CD8-positive, alpha-beta memory T cell (primary cell): ENCODE measurements at regions of chr19 and their contacts with region 1.

Region 1: GRCh38 chr19:42132851-42133528 is 744 bp upstream of the POU2F2 start:
- DNase-seq: peak; percentile 79 to 86 (median 80)
- H3K4me3 ChIP-seq: peak overlapping the region; percentile 90
- H3K4me3 Mint-ChIP-seq: peak overlapping the region; percentile 77 to 95 (median 87)
- H3K27ac ChIP-seq: peak overlapping the region; percentile 56
- H3K27ac Mint-ChIP-seq: peak overlapping the region; percentile 72 to 97 (median 96)
- H3K4me1 ChIP-seq: peaks cover 43% of the 10 kb centered on the region
- H3K4me1 Mint-ChIP-seq: peaks cover 56 to 80% (median 63%) of the 10 kb centered on the region in 3 donors
- H3K27me3 ChIP-seq: no peaks in the 10 kb centered on the region
- H3K27me3 Mint-ChIP-seq: no peaks in the 10 kb centered on the region

Region 2: GRCh38 chr19:42108527-42109389 is 24.2 kb before region 1 on chr19:
- CTCF ChIA-PET with region 1: interaction called, 46 read pairs
- POLR2A ChIA-PET with region 1: no interaction called
- DNase-seq: peak; percentile 79 to 91 (median 83)
- H3K4me3 ChIP-seq: no peak overlapping the region
- H3K4me3 Mint-ChIP-seq: no peak overlapping the region
- H3K27ac ChIP-seq: no peak overlapping the region
- H3K27ac Mint-ChIP-seq: peak overlapping the region in 5 of 8 donors; percentile 36 to 77 (median 58)
- H3K4me1 ChIP-seq: peaks cover 6% of the 10 kb centered on the region
- H3K4me1 Mint-ChIP-seq: peaks cover 3 to 12% (median 11%) of the 10 kb centered on the region in 3 donors
- H3K27me3 ChIP-seq: no peaks in the 10 kb centered on the region
- H3K27me3 Mint-ChIP-seq: no peaks in the 10 kb centered on the region

Region 3: DNA sequence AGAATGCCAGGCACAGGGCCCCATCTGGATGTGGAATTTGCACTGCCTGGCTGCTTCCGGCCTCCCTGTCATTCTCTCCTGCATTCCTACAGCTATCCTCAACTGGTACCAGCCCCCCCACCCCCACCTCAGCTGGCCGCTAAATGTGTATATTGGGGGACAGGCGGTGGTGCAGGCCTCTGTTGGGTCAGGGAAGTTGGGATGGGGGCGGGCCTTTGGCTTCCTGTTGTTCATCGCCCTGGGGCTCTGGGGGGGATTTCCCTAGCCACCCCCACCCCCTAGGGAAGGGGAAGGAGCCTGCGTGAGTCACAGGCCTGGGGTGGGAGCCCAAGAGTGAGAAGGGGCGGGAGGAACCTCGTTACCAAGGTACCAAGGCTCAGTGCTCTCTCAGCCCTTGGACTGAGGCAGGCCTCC is 11.3 kb before region 1 on chr19:
- CTCF ChIA-PET with region 1: interaction called, 16 read pairs
- POLR2A ChIA-PET with region 1: interaction called, 5 read pairs
- DNase-seq: peak; percentile 41 to 83 (median 53)
- H3K4me3 ChIP-seq: peak overlapping the region; percentile 32
- H3K4me3 Mint-ChIP-seq: peak overlapping the region in 6 of 7 donors; percentile 45 to 81 (median 70)
- H3K27ac ChIP-seq: peak overlapping the region; percentile 64
- H3K27ac Mint-ChIP-seq: peak overlapping the region; percentile 86 to 98 (median 95)
- H3K4me1 ChIP-seq: peaks cover 48% of the 10 kb centered on the region
- H3K4me1 Mint-ChIP-seq: peaks cover 51 to 63% (median 51%) of the 10 kb centered on the region in 3 donors
- H3K27me3 ChIP-seq: no peaks in the 10 kb centered on the region
- H3K27me3 Mint-ChIP-seq: no peaks in the 10 kb centered on the region

Region 4: GRCh38 chr19:42176990-42177685 is 44.1 kb after region 1 on chr19:
- CTCF ChIA-PET with region 1: interaction called, 13 read pairs
- POLR2A ChIA-PET with region 1: no interaction called
- DNase-seq: peak; percentile 65 to 83 (median 72)
- H3K4me3 ChIP-seq: peak overlapping the region; percentile 17
- H3K4me3 Mint-ChIP-seq: peak overlapping the region in 2 of 7 donors; percentile 45 to 83
- H3K27ac ChIP-seq: no peak overlapping the region
- H3K27ac Mint-ChIP-seq: no peak overlapping the region
- H3K4me1 ChIP-seq: peaks cover 12% of the 10 kb centered on the region
- H3K4me1 Mint-ChIP-seq: peaks cover 10 to 18% (median 13%) of the 10 kb centered on the region in 3 donors
- H3K27me3 ChIP-seq: peaks cover 18% of the 10 kb centered on the region
- H3K27me3 Mint-ChIP-seq: peaks cover 7 to 23% of the 10 kb centered on the region in 2 donors

Region 5: DNA sequence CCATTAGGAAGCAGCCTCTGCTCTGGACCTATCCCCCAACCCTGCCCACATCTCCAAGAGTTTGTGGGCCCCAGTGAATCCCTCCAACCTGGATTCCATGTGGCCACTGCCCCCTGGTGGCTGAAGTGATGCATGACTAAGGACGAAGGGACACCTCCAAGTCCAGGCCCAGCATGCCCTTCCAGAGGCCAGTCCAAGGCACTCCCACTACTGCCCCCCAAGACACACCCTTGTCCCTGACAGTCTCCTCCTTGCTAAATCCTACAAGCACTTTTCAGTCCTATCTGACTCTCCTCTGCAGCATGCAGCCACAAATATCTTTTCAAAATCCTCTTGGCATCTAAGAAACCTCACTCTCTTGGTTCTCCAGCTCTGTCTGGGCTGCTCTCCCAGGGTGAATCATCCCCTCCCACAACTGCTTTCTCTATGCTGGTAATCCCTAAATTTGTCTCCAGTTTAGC is 51.4 kb after region 1 on chr19:
- CTCF ChIA-PET with region 1: interaction called, 19 read pairs
- POLR2A ChIA-PET with region 1: no interaction called
- DNase-seq: peak; percentile 45 to 84 (median 60)
- H3K4me3 ChIP-seq: no peak overlapping the region
- H3K4me3 Mint-ChIP-seq: peak overlapping the region in 6 of 7 donors; percentile 15 to 77 (median 50)
- H3K27ac ChIP-seq: no peak overlapping the region
- H3K27ac Mint-ChIP-seq: peak overlapping the region in 7 of 8 donors; percentile 13 to 94 (median 68)
- H3K4me1 ChIP-seq: peaks cover 21% of the 10 kb centered on the region
- H3K4me1 Mint-ChIP-seq: peaks cover 49 to 60% (median 50%) of the 10 kb centered on the region in 3 donors
- H3K27me3 ChIP-seq: peaks cover 7% of the 10 kb centered on the region
- H3K27me3 Mint-ChIP-seq: peaks cover 0 to 8% of the 10 kb centered on the region in 2 donors

Region 6: GRCh38 chr19:42244347-42245220 is 111.6 kb after region 1 on chr19:
- CTCF ChIA-PET with region 1: interaction called, 10 read pairs
- POLR2A ChIA-PET with region 1: interaction called, 9 read pairs
- DNase-seq: peak; percentile 84 to 94 (median 86)
- H3K4me3 ChIP-seq: peak overlapping the region; percentile 81
- H3K4me3 Mint-ChIP-seq: peak overlapping the region; percentile 94 to 99 (median 96)
- H3K27ac ChIP-seq: peak overlapping the region; percentile 66
- H3K27ac Mint-ChIP-seq: peak overlapping the region; percentile 95 to 99 (median 98)
- H3K4me1 ChIP-seq: peaks cover 40% of the 10 kb centered on the region
- H3K4me1 Mint-ChIP-seq: peaks cover 42 to 58% (median 45%) of the 10 kb centered on the region in 3 donors
- H3K27me3 ChIP-seq: no peaks in the 10 kb centered on the region
- H3K27me3 Mint-ChIP-seq: peaks cover 0 to 2% of the 10 kb centered on the region in 2 donors

Region 7: GRCh38 chr19:42295831-42296525 is 163.0 kb after region 1 on chr19:
- CTCF ChIA-PET with region 1: interaction called, 16 read pairs
- POLR2A ChIA-PET with region 1: interaction called, 3 read pairs
- DNase-seq: peak; percentile 77 to 92 (median 85)
- H3K4me3 ChIP-seq: no peak overlapping the region
- H3K4me3 Mint-ChIP-seq: no peak overlapping the region
- H3K27ac ChIP-seq: no peak overlapping the region
- H3K27ac Mint-ChIP-seq: peak overlapping the region in 5 of 8 donors; percentile 55 to 70 (median 61)
- H3K4me1 ChIP-seq: no peaks in the 10 kb centered on the region
- H3K4me1 Mint-ChIP-seq: peaks cover 5 to 17% (median 10%) of the 10 kb centered on the region in 3 donors
- H3K27me3 ChIP-seq: no peaks in the 10 kb centered on the region
- H3K27me3 Mint-ChIP-seq: no peaks in the 10 kb centered on the region